Kidney (tissue), 22 donors: ENCODE measurements at regions of chr22 and their contacts with region 1.

Region 1: GRCh38 chr22:37544955-37545699 is 15.2 kb upstream of the CDC42EP1 start:
- DNase-seq: peak; percentile 62 to 87 (median 76)
- H3K4me3 ChIP-seq: no peak overlapping the region
- H3K27ac ChIP-seq: peak overlapping the region; percentile 84 to 93
- H3K4me1 ChIP-seq: peaks cover 2 to 29% (median 13%) of the 10 kb centered on the region in 3 donors
- H3K27me3 ChIP-seq: no peaks in the 10 kb centered on the region
- CTCF ChIP-seq: peak; percentile 72

Region 2: GRCh38 chr22:37594237-37594636 is 49.1 kb after region 1 on chr22:
- intact Hi-C with region 1: loop called (anchors 5 kb)
- DNase-seq: no peak
- H3K4me3 ChIP-seq: no peak overlapping the region
- H3K27ac ChIP-seq: no peak overlapping the region
- H3K4me1 ChIP-seq: peaks cover 0 to 6% (median 0%) of the 10 kb centered on the region in 3 donors
- H3K27me3 ChIP-seq: no peaks in the 10 kb centered on the region
- CTCF ChIP-seq: no peak